Activated CD4-positive, alpha-beta T cell treated with anti-CD3 and anti-CD28 coated beads, Interleukin-2, amount 10 ng/mL, durations not matched to agents 24 days and 14 days (primary cell): ENCODE measurements at regions of chr22 and their contacts with region 1.

Region 1: GRCh38 chr22:37121887-37122591 is 12.5 kb upstream of the TMPRSS6 start:
- DNase-seq: peak; percentile 98
- H3K4me3 Mint-ChIP-seq: peak overlapping the region; percentile 81
- H3K27ac Mint-ChIP-seq: peak overlapping the region; percentile 98
- H3K4me1 Mint-ChIP-seq: peaks cover 74% of the 10 kb centered on the region
- H3K27me3 Mint-ChIP-seq: no peaks in the 10 kb centered on the region

Region 2: GRCh38 chr22:37077884-37078485 is 44.1 kb before region 1 on chr22:
- intact Hi-C with region 1: loop called (anchors 1 kb)
- DNase-seq: peak; percentile 96
- H3K4me3 Mint-ChIP-seq: peak overlapping the region; percentile 79
- H3K27ac Mint-ChIP-seq: peak overlapping the region; percentile 98
- H3K4me1 Mint-ChIP-seq: peaks cover 56% of the 10 kb centered on the region
- H3K27me3 Mint-ChIP-seq: no peaks in the 10 kb centered on the region

Region 3: GRCh38 chr22:37100589-37101127 is 21.4 kb before region 1 on chr22:
- intact Hi-C with region 1: loop called (anchors 1 kb)
- DNase-seq: no peak
- H3K4me3 Mint-ChIP-seq: no peak overlapping the region
- H3K27ac Mint-ChIP-seq: peak overlapping the region; percentile 40
- H3K4me1 Mint-ChIP-seq: peaks cover 27% of the 10 kb centered on the region
- H3K27me3 Mint-ChIP-seq: no peaks in the 10 kb centered on the region

Region 4: GRCh38 chr22:37148742-37149665 is 27.0 kb after region 1 on chr22:
- intact Hi-C with region 1: loop called (anchors 1 kb)
- DNase-seq: peak; percentile 68
- H3K4me3 Mint-ChIP-seq: peak overlapping the region; percentile 96
- H3K27ac Mint-ChIP-seq: peak overlapping the region; percentile 99
- H3K4me1 Mint-ChIP-seq: peaks cover 54% of the 10 kb centered on the region
- H3K27me3 Mint-ChIP-seq: peaks cover 2% of the 10 kb centered on the region

Region 5: GRCh38 chr22:37244114-37244921 is 122.3 kb after region 1 on chr22 and contains the start of gene RAC2:
- intact Hi-C with region 1: loop called (anchors 5 kb)
- DNase-seq: peak; percentile 95
- H3K4me3 Mint-ChIP-seq: peak within 1 kb of the TSS; percentile 99
- H3K27ac Mint-ChIP-seq: peak within 1 kb of the TSS; percentile 98
- H3K4me1 Mint-ChIP-seq: peaks cover 48% of the 10 kb centered on the region
- H3K27me3 Mint-ChIP-seq: no peaks in the 10 kb centered on the region
- total RNA-seq, gene RAC2: 519 and 540 TPM in 2 replicates